Kidney (tissue), 22 donors: ENCODE measurements at regions of chr10 and their contacts with region 1.

Region 1: GRCh38 chr10:43292755-43293676 is 26.2 kb upstream of the RASGEF1A start:
- DNase-seq: peak in 4 of 5 donors; percentile 55 to 78 (median 66)
- H3K4me3 ChIP-seq: no peak overlapping the region
- H3K27ac ChIP-seq: no peak overlapping the region
- H3K4me1 ChIP-seq: no peaks in the 10 kb centered on the region
- H3K27me3 ChIP-seq: no peaks in the 10 kb centered on the region
- CTCF ChIP-seq: peak; percentile 66

Region 2: DNA sequence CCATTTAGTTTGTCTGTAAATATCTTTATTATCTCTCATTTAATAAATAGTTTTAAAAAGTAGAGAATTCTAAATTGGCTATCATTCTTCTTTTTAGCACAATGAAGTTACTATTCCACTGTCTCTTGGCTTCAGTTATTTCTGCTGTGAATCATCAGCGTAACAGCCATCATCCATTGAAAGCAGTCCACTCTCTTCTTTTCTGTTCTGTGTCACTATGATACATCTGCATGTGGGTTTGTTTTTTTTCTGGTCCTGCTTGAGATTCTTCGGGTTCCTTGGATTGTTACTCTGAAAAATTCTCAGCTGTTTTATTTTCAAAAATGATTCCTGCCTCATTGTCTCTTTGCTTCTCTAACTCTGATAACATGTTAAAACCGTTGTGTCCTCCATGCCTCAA is 102.2 kb before region 1 on chr10:
- intact Hi-C with region 1: no loop called
- DNase-seq: no peak
- H3K4me3 ChIP-seq: no peak overlapping the region
- H3K27ac ChIP-seq: no peak overlapping the region
- H3K4me1 ChIP-seq: no peaks in the 10 kb centered on the region
- H3K27me3 ChIP-seq: no peaks in the 10 kb centered on the region
- CTCF ChIP-seq: no peak

Region 3: DNA sequence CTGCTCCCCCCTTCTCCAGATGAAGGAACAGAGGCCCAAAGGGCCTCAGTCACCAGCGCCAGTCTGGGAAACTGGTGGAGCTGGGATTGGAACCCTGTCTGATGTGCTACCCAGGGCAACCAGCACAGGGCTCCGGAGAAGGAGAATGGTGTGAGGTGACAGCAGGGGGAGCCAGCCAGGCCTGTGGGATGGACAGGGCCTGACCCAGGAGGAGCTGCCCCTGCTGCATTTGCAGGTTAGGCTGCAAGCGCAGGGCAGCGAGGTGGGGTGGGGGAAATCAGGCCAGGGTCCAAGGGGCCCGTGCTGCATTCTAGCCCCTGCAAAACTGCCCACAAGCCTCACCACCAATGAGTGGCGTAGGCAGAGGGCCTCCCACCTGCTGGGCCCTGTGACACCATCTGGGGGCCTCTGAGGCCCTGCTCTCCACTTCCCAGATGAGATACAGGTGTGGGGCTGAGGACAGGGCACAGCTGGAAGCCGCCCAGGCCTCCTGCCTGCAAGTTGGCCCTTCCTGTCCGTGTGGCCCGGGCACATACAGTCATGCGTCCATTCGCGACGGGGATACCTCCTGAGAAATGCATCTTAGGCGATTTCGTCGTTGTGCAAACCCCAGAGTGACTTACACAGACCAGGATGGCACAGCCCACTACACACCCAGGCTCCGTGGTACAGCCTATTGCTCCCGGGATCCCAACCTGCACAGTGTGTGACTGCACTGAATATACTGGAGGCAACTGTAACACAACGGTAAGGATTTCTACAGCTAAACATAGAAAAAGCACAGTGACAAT is 71.4 kb before region 1 on chr10:
- intact Hi-C with region 1: no loop called
- DNase-seq: peak in 2 of 5 donors; percentile 35 to 63
- H3K4me3 ChIP-seq: no peak overlapping the region
- H3K27ac ChIP-seq: no peak overlapping the region
- H3K4me1 ChIP-seq: no peaks in the 10 kb centered on the region
- H3K27me3 ChIP-seq: no peaks in the 10 kb centered on the region
- CTCF ChIP-seq: no peak

Region 4: GRCh38 chr10:43348511-43349312 is 55.7 kb after region 1 on chr10:
- intact Hi-C with region 1: loop called (anchors 10 kb)
- DNase-seq: peak; percentile 88 to 93 (median 89)
- H3K4me3 ChIP-seq: no peak overlapping the region
- H3K27ac ChIP-seq: no peak overlapping the region
- H3K4me1 ChIP-seq: no peaks in the 10 kb centered on the region
- H3K27me3 ChIP-seq: no peaks in the 10 kb centered on the region
- CTCF ChIP-seq: peak; percentile 95